A549 (cell line): ENCODE measurements at regions of chr16 and their contacts with region 1.

Region 1: GRCh38 chr16:72099377-72099818 is 5.8 kb downstream of the DHX38 start:
- DNase-seq: peak; percentile 76 to 87
- ATAC-seq: peak; percentile 94 to 98
- H3K4me3 ChIP-seq: no peak overlapping the region
- H3K27ac ChIP-seq: no peak overlapping the region
- H3K4me1 ChIP-seq: peaks cover 8% of the 10 kb centered on the region; the same call in 2 of the 3 replicates
- CTCF ChIP-seq: peak; percentile 57
- EP300 ChIP-seq: no peak
- POLR2A ChIP-seq: no peak
- RAD21 ChIP-seq: peak; percentile 71 to 78

Region 2: GRCh38 chr16:72043058-72043457 is 56.3 kb before region 1 on chr16:
- CTCF ChIA-PET with region 1: no interaction called
- POLR2A ChIA-PET with region 1: no interaction called
- DNase-seq: no peak
- ATAC-seq: no peak
- H3K4me3 ChIP-seq: no peak overlapping the region
- H3K27ac ChIP-seq: no peak overlapping the region
- H3K4me1 ChIP-seq: no peaks in the 10 kb centered on the region
- CTCF ChIP-seq: no peak
- EP300 ChIP-seq: no peak
- POLR2A ChIP-seq: no peak
- RAD21 ChIP-seq: no peak

Region 3: DNA sequence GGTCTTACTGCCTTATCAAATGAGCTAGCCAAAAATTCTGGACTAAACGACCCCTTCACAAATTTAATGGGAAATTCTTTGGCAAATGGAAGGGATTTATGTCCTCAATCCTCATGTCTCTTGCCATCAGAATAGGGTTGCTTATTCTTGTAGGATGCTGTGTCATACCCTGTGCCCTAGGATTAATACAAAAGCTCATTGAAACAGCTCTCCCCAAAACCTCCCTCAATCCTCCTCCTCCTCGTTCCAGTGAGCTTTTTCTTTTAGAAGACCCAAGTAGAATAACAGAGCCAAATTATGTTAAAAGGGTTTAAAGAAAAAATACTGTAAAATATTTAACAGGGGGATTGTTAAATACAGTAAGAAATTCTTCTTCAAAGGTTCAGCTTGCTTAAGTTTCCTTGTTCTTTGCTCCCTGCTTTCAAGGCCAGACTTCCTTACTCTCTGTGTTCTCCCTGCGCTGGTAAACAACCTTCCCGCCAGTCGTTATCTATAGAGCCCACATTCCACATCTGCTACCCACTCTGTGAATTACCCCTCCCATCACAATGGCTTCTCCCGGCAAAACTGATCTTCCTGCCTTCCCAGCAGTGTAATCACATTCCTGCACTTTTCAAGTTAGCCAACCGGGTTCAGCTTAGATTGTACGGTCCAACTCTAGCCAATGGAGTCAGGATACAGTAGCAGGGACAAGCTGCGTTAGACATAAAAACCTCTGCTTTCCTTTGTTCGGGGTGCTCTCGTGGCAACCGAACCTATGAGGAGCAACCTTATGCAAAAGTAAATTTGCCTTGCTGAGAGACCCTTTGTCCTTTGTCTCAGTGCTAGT is 26.7 kb before region 1 on chr16:
- CTCF ChIA-PET with region 1: interaction called, 43 read pairs
- POLR2A ChIA-PET with region 1: no interaction called
- DNase-seq: no peak
- ATAC-seq: no peak
- H3K4me3 ChIP-seq: no peak overlapping the region
- H3K27ac ChIP-seq: no peak overlapping the region
- H3K4me1 ChIP-seq: no peaks in the 10 kb centered on the region
- CTCF ChIP-seq: no peak
- EP300 ChIP-seq: no peak
- POLR2A ChIP-seq: no peak
- RAD21 ChIP-seq: no peak

Region 4: DNA sequence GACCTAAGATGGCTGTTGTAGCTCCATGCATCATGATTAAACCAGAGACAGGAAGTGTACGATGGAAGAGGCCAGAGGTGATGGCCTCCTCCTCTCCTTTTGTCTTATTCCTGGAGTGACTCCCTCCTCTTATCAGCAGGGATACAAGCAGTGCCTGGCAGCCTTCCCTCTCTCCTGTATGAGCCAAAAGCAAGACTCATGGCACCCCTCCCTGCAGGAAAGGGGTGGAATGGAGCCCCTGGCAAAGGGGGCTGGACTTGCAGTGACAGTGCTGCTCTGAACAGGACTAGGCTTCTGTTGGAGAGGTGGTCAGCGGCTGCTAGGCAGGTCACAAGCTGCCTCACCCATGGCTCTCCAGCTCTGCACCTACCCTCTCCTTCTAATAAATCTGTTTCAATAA is 14.4 kb before region 1 on chr16:
- CTCF ChIA-PET with region 1: interaction called, 10 read pairs
- POLR2A ChIA-PET with region 1: no interaction called
- DNase-seq: no peak
- ATAC-seq: no peak
- H3K4me3 ChIP-seq: no peak overlapping the region
- H3K27ac ChIP-seq: no peak overlapping the region
- H3K4me1 ChIP-seq: peaks cover 7% of the 10 kb centered on the region; the same call in 1 of the 3 replicates
- CTCF ChIP-seq: no peak
- EP300 ChIP-seq: no peak
- POLR2A ChIP-seq: no peak
- RAD21 ChIP-seq: no peak